Naive thymus-derived CD8-positive, alpha-beta T cell (primary cell): ENCODE measurements at regions of chr1 and their contacts with region 1.

Region 1: DNA sequence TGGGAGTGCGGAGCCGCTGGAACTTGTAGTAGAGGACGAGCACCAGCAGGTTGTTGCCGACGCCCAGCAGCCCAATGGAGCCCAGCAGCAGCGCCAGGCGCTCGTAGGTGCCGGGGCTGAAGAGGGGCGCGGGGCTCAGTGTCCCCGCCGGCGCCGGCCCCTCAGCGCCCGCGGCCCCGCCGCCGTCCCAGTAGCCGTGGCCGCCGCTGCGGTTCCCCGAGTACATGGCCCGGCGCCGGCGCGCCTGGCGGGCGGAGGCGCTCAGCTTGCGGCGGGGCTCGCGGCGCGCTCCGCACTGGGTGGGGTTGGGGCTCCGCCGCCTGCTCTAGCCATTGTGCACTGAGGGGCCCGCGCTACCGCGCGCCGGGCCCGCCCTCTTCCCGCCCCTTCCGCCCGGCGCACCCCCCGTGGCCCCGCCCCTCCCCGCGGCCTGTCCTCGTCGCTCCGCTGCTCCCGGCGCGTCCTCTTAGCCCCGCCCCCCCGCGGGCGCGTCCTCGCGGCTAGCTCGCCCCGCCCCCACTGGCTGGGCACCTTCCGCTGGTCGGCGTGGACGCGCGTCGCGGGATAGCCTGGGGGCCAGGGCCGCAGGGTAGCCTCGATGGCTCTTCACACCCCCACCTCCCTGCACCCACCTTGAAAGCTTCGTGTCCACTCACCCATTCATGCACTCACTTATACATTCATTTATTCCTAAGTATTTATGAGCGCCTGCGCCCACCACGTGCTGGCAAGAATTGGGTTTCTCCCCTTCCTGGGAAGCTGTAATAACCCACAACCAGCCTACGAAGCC is at the starts of genes CHML and OPN3:
- DNase-seq: peak; percentile 74 to 94 (median 86)
- ATAC-seq: peak; percentile 92 to 94
- H3K4me3 Mint-ChIP-seq: peak within 1 kb of the TSS; percentile 82 to 95 (median 90)
- H3K27ac Mint-ChIP-seq: peak within 1 kb of the TSS; percentile 83 to 97 (median 94)
- H3K4me1 Mint-ChIP-seq: peaks cover 19 to 50% (median 46%) of the 10 kb centered on the region in 4 donors
- H3K27me3 Mint-ChIP-seq: no peaks in the 10 kb centered on the region
- polyA plus RNA-seq, gene CHML: 6.0 to 6.6 (median 6.5) TPM
- polyA plus RNA-seq, gene OPN3: 24.4 to 36.0 (median 33.5) TPM

Region 2: DNA sequence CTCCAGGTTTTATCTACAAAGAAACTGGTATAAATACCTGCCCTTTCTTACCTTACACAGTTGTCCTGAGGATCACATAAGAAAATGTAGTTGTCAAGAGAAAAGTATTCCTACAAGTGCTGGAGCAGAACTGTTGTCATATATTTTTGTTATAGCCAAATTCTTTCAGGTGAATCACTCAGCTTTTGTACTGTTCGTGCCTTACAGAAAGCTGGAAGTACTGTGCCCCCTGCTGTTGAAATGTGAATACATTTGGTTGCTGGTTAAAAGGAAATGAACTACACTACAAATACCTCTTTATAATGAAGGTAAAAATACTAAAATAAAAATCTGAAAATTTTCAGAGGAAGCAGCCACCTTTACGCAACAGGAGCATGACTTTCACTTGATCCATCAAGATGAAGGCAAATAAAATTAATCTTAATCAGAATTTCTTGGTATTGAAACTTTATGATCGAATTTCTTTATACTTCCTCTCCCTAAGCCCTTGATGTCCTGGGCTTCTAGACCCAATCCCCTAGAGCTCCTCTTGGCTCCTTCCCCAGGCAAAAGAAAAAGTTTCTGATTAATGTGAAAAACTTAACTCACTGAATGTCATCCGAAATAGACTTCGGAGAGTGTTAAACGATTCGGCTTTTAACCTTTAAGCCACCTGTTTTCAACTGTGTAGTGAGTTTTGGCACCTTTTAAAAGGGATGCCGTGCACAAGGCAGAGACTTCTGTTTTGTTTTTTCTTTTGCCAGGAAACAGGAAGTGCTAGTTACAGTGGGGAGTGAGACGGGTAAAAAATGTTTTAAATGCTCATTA is 12.6 kb before region 1 on chr1:
- POLR2A ChIA-PET with region 1: interaction called, 20 read pairs
- DNase-seq: peak in 9 of 10 donors; percentile 12 to 78 (median 60)
- ATAC-seq: peak; percentile 84 to 87
- H3K4me3 Mint-ChIP-seq: peak overlapping the region; percentile 76 to 90 (median 84)
- H3K27ac Mint-ChIP-seq: peak overlapping the region; percentile 89 to 97 (median 94)
- H3K4me1 Mint-ChIP-seq: peaks cover 10 to 36% (median 24%) of the 10 kb centered on the region in 4 donors
- H3K27me3 Mint-ChIP-seq: no peaks in the 10 kb centered on the region

Region 3: GRCh38 chr1:241677201-241677600 is 37.0 kb after region 1 on chr1:
- POLR2A ChIA-PET with region 1: interaction called, 10 read pairs
- DNase-seq: peak in 9 of 10 donors; percentile 9 to 83 (median 61)
- ATAC-seq: peak; percentile 96 to 99
- H3K4me3 Mint-ChIP-seq: peak overlapping the region; percentile 38 to 76 (median 70)
- H3K27ac Mint-ChIP-seq: peak overlapping the region; percentile 79 to 95 (median 87)
- H3K4me1 Mint-ChIP-seq: peaks cover 15 to 22% (median 18%) of the 10 kb centered on the region in 4 donors
- H3K27me3 Mint-ChIP-seq: no peaks in the 10 kb centered on the region

Region 4: GRCh38 chr1:241706954-241707365 is 66.7 kb after region 1 on chr1:
- POLR2A ChIA-PET with region 1: interaction called, 10 read pairs
- DNase-seq: peak; percentile 23 to 84 (median 68)
- ATAC-seq: peak; percentile 93 to 99
- H3K4me3 Mint-ChIP-seq: peak overlapping the region; percentile 6 to 80 (median 72)
- H3K27ac Mint-ChIP-seq: peak overlapping the region; percentile 63 to 84 (median 78)
- H3K4me1 Mint-ChIP-seq: peaks cover 16 to 27% (median 23%) of the 10 kb centered on the region in 4 donors
- H3K27me3 Mint-ChIP-seq: no peaks in the 10 kb centered on the region